Body of pancreas (tissue), 4 donors: ENCODE measurements at regions of chr7 and their contacts with region 1.

Region 1: DNA sequence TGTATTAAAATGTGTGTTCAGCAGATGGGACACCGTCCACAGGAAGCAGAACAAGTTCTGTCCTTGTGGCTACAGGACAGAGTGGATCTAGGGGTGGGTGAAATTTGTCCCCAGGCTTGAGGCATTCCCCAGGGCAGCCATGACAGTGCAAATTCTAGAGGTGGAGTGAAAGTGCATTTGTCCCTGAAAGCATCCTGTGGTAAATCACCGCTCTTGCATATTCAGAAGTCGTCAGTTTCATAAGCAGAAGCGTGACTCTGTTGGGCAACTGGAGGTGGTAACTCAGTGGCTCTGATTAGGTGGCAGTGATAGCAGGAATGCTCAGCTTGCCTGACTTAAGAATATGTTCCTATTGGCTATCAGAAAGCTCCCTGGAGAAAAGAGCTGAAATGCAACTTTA is 96.6 kb downstream of the SNX10 start:
- DNase-seq: no peak
- ATAC-seq: no peak
- H3K4me3 ChIP-seq: no peak overlapping the region
- H3K27ac ChIP-seq: no peak overlapping the region
- H3K4me1 ChIP-seq: no peaks in the 10 kb centered on the region
- H3K27me3 ChIP-seq: no peaks in the 10 kb centered on the region
- CTCF ChIP-seq: no peak
- POLR2A ChIP-seq: no peak

Region 2: DNA sequence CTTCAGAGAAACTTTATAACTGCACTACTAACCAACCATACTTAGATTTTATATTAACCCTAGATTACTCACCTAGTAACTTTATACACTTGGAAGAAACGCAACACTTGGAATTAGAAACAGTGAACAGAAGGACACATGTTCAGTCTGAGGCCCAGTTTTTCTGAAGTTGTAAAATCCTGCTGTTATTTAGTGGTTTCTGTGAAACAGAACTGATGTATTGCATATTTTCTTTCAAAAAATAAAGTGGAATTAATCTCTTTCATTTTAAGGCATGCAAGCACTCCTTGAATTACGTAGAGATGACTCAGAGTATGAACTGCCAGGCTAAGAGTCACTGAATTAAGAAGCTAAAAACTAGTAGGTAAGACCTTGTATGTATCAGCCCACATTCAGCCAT is 260.3 kb after region 1 on chr7:
- intact Hi-C with region 1: loop called (anchors 10 kb)
- DNase-seq: no peak
- ATAC-seq: no peak
- H3K4me3 ChIP-seq: no peak overlapping the region
- H3K27ac ChIP-seq: no peak overlapping the region
- H3K4me1 ChIP-seq: no peaks in the 10 kb centered on the region
- H3K27me3 ChIP-seq: no peaks in the 10 kb centered on the region
- CTCF ChIP-seq: no peak
- POLR2A ChIP-seq: no peak